HepG2 (cell line): ENCODE measurements at regions of chr17 and their contacts with region 1.

Region 1: DNA sequence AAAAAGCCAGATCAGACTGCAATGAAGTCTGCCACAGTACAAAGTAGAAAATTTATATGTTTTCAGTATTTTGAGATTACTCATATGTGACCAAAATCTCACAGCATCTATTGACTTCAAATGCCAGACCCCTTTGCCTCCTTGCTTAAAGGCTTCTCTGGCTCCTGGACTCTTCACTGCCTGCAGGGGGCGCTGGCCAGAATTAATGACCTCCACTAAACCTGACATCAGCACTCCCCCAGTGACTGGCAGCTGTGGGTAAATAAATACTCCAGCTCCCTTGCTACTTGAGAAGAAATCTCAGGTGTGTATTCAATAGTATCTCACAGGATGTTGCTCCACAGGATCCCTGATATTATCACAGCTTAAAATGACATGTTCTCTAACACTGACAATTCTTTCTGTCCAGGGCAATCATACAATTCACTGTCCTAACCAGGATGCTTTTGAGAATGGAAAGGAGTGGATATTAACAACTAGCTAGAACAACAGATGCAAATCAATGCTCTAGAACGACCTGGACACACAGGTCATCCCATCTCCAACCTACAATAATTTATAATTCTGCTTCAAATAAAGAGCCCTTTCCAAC is 4.0 kb downstream of the BECN1 start:
- DNase-seq: peak; percentile 88
- ATAC-seq: peak; percentile 67
- H3K4me3 ChIP-seq: no peak overlapping the region
- H3K27ac ChIP-seq: no peak overlapping the region
- H3K4me1 ChIP-seq: peaks cover 35% of the 10 kb centered on the region
- H3K27me3 ChIP-seq: peaks cover 0 to 7% of the 10 kb centered on the region in 2 experiments; a peak in 1 of 5 replicates
- CTCF ChIP-seq: peak; percentile 81
- EP300 ChIP-seq: no peak
- POLR2A ChIP-seq: no peak
- RAD21 ChIP-seq: peak; percentile 60

Region 2: GRCh38 chr17:42598905-42599304 is 221.1 kb before region 1 on chr17:
- CTCF ChIA-PET with region 1: no interaction called
- POLR2A ChIA-PET with region 1: no interaction called
- in situ Hi-C with region 1: no loop called
- intact Hi-C with region 1: no loop called
- DNase-seq: no peak
- ATAC-seq: no peak
- H3K4me3 ChIP-seq: no peak overlapping the region
- H3K27ac ChIP-seq: no peak overlapping the region
- H3K4me1 ChIP-seq: no peaks in the 10 kb centered on the region
- H3K27me3 ChIP-seq: no peaks in the 10 kb centered on the region
- CTCF ChIP-seq: no peak
- EP300 ChIP-seq: no peak
- POLR2A ChIP-seq: no peak
- RAD21 ChIP-seq: no peak

Region 3: GRCh38 chr17:42744806-42745617 is 75.0 kb before region 1 on chr17 and contains the start of gene EZH1:
- CTCF ChIA-PET with region 1: no interaction called
- POLR2A ChIA-PET with region 1: interaction called, 10 read pairs
- in situ Hi-C with region 1: no loop called
- intact Hi-C with region 1: no loop called
- DNase-seq: peak; percentile 91
- ATAC-seq: peak; percentile 89
- H3K4me3 ChIP-seq: peak within 1 kb of the TSS; percentile 58 to 84 (median 76)
- H3K27ac ChIP-seq: peak within 1 kb of the TSS; percentile 83
- H3K4me1 ChIP-seq: peaks cover 62% of the 10 kb centered on the region
- H3K27me3 ChIP-seq: no peaks in the 10 kb centered on the region
- CTCF ChIP-seq: no peak; the same call in 1 of the 2 replicates
- EP300 ChIP-seq: peak; percentile 3 to 45; a peak in 1 of 4 replicates
- POLR2A ChIP-seq: peak; percentile 62 to 64; a peak in 3 of 4 replicates
- RAD21 ChIP-seq: no peak
- total RNA-seq, gene EZH1: 6.0 and 11.6 TPM in 2 replicates

Region 4: GRCh38 chr17:42773290-42774035 is 46.6 kb before region 1 on chr17 and contains the start of gene VPS25:
- CTCF ChIA-PET with region 1: no interaction called
- POLR2A ChIA-PET with region 1: interaction called, 78 read pairs
- in situ Hi-C with region 1: no loop called
- intact Hi-C with region 1: loop called (anchors 1 kb)
- DNase-seq: peak; percentile 84
- ATAC-seq: peak; percentile 95
- H3K4me3 ChIP-seq: peak within 1 kb of the TSS; percentile 74 to 96 (median 88)
- H3K27ac ChIP-seq: peak within 1 kb of the TSS; percentile 66
- H3K4me1 ChIP-seq: peaks cover 53% of the 10 kb centered on the region
- H3K27me3 ChIP-seq: no peaks in the 10 kb centered on the region; a peak in 1 of 5 replicates
- CTCF ChIP-seq: peak; percentile 61
- EP300 ChIP-seq: peak; percentile 44 to 53; a peak in 2 of 4 replicates
- POLR2A ChIP-seq: peak; percentile 95 to 96
- RAD21 ChIP-seq: peak; percentile 74
- total RNA-seq, gene VPS25: 148 and 161 TPM in 2 replicates

Region 5: GRCh38 chr17:42798383-42799380 is 21.4 kb before region 1 on chr17 and contains the starts of genes CNTD1 and COA3:
- CTCF ChIA-PET with region 1: no interaction called
- POLR2A ChIA-PET with region 1: interaction called, 52 read pairs
- in situ Hi-C with region 1: no loop called
- intact Hi-C with region 1: loop called (anchors 2 kb)
- DNase-seq: peak; percentile 88
- ATAC-seq: peak; percentile 89
- H3K4me3 ChIP-seq: peak within 1 kb of the TSS; percentile 88 to 94 (median 94)
- H3K27ac ChIP-seq: peak within 1 kb of the TSS; percentile 88
- H3K4me1 ChIP-seq: peaks cover 58% of the 10 kb centered on the region
- H3K27me3 ChIP-seq: no peaks in the 10 kb centered on the region; a peak in 2 of 5 replicates
- CTCF ChIP-seq: peak; percentile 42
- EP300 ChIP-seq: peak in 1 of 2 experiments; percentile 34; a peak in 1 of 4 replicates
- POLR2A ChIP-seq: peak; percentile 77 to 92
- RAD21 ChIP-seq: peak; percentile 67
- total RNA-seq, gene CNTD1: 0.11 TPM in 1 of 2 replicates, not detected in the other
- total RNA-seq, gene COA3: 202 and 250 TPM in 2 replicates

Region 6: GRCh38 chr17:42832974-42833766 is 13.1 kb after region 1 on chr17 and contains the start of gene PSME3:
- CTCF ChIA-PET with region 1: no interaction called
- POLR2A ChIA-PET with region 1: interaction called, 73 read pairs
- in situ Hi-C with region 1: no loop called
- intact Hi-C with region 1: no loop called
- DNase-seq: peak; percentile 88
- ATAC-seq: peak; percentile 95
- H3K4me3 ChIP-seq: peak within 1 kb of the TSS; percentile 92 to 98 (median 92)
- H3K27ac ChIP-seq: peak within 1 kb of the TSS; percentile 90
- H3K4me1 ChIP-seq: peaks cover 40% of the 10 kb centered on the region
- H3K27me3 ChIP-seq: no peaks in the 10 kb centered on the region; a peak in 1 of 5 replicates
- CTCF ChIP-seq: peak; percentile 37
- EP300 ChIP-seq: peak in 1 of 2 experiments; percentile 26; a peak in 2 of 4 replicates
- POLR2A ChIP-seq: peak; percentile 93 to 97
- RAD21 ChIP-seq: peak; percentile 30; the same call in 1 of the 2 replicates
- total RNA-seq, gene PSME3: 135 and 202 TPM in 2 replicates

Region 7: DNA sequence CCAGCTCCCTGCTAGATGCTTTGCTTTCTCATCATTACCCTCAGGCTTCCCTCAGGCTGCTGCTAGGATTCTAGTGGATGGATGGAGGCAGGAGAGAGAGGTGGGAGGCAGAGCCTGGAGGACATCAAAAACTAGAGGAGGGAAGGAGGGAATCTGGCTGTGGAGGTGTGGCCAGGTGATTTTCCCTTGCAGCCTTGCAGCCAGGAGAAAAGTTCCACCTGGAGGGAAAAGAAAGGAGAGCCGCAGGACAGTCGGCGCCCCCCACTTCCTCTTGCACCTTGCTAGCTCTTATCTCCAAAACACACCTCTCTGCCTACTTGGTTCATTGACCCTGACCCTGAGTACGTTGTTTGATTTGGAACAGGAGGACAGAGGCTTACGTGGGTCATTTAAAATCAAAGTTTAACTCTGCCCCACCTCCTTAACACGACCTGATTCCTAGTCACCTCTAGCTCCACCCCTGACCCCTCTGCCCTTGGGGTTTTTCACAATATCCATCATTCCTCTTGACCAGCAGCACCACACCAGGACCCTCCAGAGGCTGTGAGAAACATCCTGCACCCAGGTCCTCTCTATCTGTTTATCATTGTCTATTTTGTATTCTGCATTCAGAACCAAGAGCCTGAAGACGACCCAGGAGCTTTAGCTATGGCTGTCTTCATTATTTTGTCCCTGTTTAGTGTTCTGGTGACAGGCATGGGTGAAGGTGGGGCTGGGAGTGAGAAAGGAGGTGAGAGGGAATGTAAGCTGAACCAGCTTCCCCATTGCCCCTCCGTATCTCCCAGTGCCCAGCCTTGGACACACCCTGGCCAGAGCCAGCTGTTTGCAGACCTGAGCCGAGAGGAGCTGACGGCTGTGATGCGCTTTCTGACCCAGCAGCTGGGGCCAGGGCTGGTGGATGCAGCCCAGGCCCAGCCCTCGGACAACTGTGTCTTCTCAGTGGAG is 46.9 kb after region 1 on chr17:
- CTCF ChIA-PET with region 1: no interaction called
- POLR2A ChIA-PET with region 1: interaction called, 10 read pairs
- in situ Hi-C with region 1: no loop called
- intact Hi-C with region 1: no loop called
- DNase-seq: peak; percentile 68
- ATAC-seq: peak; percentile 60
- H3K4me3 ChIP-seq: peak overlapping the region in 2 of 3 experiments; percentile 18 to 44; a peak in 4 of 6 replicates
- H3K27ac ChIP-seq: peak overlapping the region; percentile 62
- H3K4me1 ChIP-seq: peaks cover 73% of the 10 kb centered on the region
- H3K27me3 ChIP-seq: no peaks in the 10 kb centered on the region
- CTCF ChIP-seq: no peak
- EP300 ChIP-seq: peak in 1 of 2 experiments; percentile 91; a peak in 2 of 4 replicates
- POLR2A ChIP-seq: peak in 1 of 2 experiments; percentile 18; a peak in 1 of 4 replicates
- RAD21 ChIP-seq: no peak